ENCODE measurements at regions of chrX and their contacts with region 1.

Region 1: GRCh38 chrX:119729408-119730201 is 28.8 kb upstream of the SOWAHD start:
- DNase-seq: peak; percentile 77
- ATAC-seq: peak; percentile 57
- H3K4me3 ChIP-seq: no peak overlapping the region
- H3K4me3 Mint-ChIP-seq: peak overlapping the region; percentile 44
- H3K27ac ChIP-seq: no peak overlapping the region
- H3K27ac Mint-ChIP-seq: no peak overlapping the region
- H3K4me1 ChIP-seq: peaks cover 0 to 5% of the 10 kb centered on the region in 2 donors
- H3K4me1 Mint-ChIP-seq: peaks cover 6% of the 10 kb centered on the region
- H3K27me3 ChIP-seq: no peaks in the 10 kb centered on the region
- H3K27me3 Mint-ChIP-seq: no peaks in the 10 kb centered on the region
- CTCF ChIP-seq: peak; percentile 71

Region 2: GRCh38 chrX:119617517-119618164 is 112.0 kb before region 1 on chrX:
- CTCF ChIA-PET with region 1: interaction called, 52 read pairs
- POLR2A ChIA-PET with region 1: interaction called, 5 read pairs
- intact Hi-C with region 1: no loop called
- DNase-seq: peak; percentile 71
- ATAC-seq: peak; percentile 48
- H3K4me3 ChIP-seq: peak overlapping the region; percentile 20 to 63 (median 35)
- H3K4me3 Mint-ChIP-seq: peak overlapping the region; percentile 83
- H3K27ac ChIP-seq: peak overlapping the region; percentile 68 to 69
- H3K27ac Mint-ChIP-seq: peak overlapping the region; percentile 90
- H3K4me1 ChIP-seq: peaks cover 58 to 69% of the 10 kb centered on the region in 2 donors
- H3K4me1 Mint-ChIP-seq: peaks cover 59% of the 10 kb centered on the region
- H3K27me3 ChIP-seq: no peaks in the 10 kb centered on the region
- H3K27me3 Mint-ChIP-seq: no peaks in the 10 kb centered on the region
- CTCF ChIP-seq: no peak

Region 3: GRCh38 chrX:119669424-119670037 is 60.1 kb before region 1 on chrX:
- CTCF ChIA-PET with region 1: interaction called, 13 read pairs
- POLR2A ChIA-PET with region 1: no interaction called
- intact Hi-C with region 1: no loop called
- DNase-seq: no peak
- ATAC-seq: no peak
- H3K4me3 ChIP-seq: no peak overlapping the region
- H3K4me3 Mint-ChIP-seq: no peak overlapping the region
- H3K27ac ChIP-seq: peak overlapping the region in 1 of 2 donors; percentile 10
- H3K27ac Mint-ChIP-seq: peak overlapping the region; percentile 41
- H3K4me1 ChIP-seq: peaks cover 25 to 31% of the 10 kb centered on the region in 2 donors
- H3K4me1 Mint-ChIP-seq: peaks cover 28% of the 10 kb centered on the region
- H3K27me3 ChIP-seq: no peaks in the 10 kb centered on the region
- H3K27me3 Mint-ChIP-seq: no peaks in the 10 kb centered on the region
- CTCF ChIP-seq: no peak

Region 4: GRCh38 chrX:119698845-119699244 is 30.8 kb before region 1 on chrX:
- CTCF ChIA-PET with region 1: interaction called, 35 read pairs
- POLR2A ChIA-PET with region 1: no interaction called
- intact Hi-C with region 1: loop called (anchors 2 kb)
- DNase-seq: peak; percentile 55
- ATAC-seq: no peak
- H3K4me3 ChIP-seq: no peak overlapping the region
- H3K4me3 Mint-ChIP-seq: no peak overlapping the region
- H3K27ac ChIP-seq: no peak overlapping the region
- H3K27ac Mint-ChIP-seq: no peak overlapping the region
- H3K4me1 ChIP-seq: peaks cover 39 to 47% of the 10 kb centered on the region in 2 donors
- H3K4me1 Mint-ChIP-seq: peaks cover 41% of the 10 kb centered on the region
- H3K27me3 ChIP-seq: no peaks in the 10 kb centered on the region
- H3K27me3 Mint-ChIP-seq: no peaks in the 10 kb centered on the region
- CTCF ChIP-seq: peak; percentile 60

Region 5: GRCh38 chrX:119778829-119779228 is 49.2 kb after region 1 on chrX:
- CTCF ChIA-PET with region 1: interaction called, 9 read pairs
- POLR2A ChIA-PET with region 1: no interaction called
- intact Hi-C with region 1: loop called (anchors 2 kb)
- DNase-seq: no peak
- ATAC-seq: no peak
- H3K4me3 ChIP-seq: no peak overlapping the region
- H3K4me3 Mint-ChIP-seq: no peak overlapping the region
- H3K27ac ChIP-seq: no peak overlapping the region
- H3K27ac Mint-ChIP-seq: peak overlapping the region; percentile 32
- H3K4me1 ChIP-seq: peaks cover 4 to 24% of the 10 kb centered on the region in 2 donors
- H3K4me1 Mint-ChIP-seq: peaks cover 27% of the 10 kb centered on the region
- H3K27me3 ChIP-seq: no peaks in the 10 kb centered on the region
- H3K27me3 Mint-ChIP-seq: no peaks in the 10 kb centered on the region
- CTCF ChIP-seq: no peak